ENCODE measurements at regions of chr21 and their contacts with region 1.

Region 1: DNA sequence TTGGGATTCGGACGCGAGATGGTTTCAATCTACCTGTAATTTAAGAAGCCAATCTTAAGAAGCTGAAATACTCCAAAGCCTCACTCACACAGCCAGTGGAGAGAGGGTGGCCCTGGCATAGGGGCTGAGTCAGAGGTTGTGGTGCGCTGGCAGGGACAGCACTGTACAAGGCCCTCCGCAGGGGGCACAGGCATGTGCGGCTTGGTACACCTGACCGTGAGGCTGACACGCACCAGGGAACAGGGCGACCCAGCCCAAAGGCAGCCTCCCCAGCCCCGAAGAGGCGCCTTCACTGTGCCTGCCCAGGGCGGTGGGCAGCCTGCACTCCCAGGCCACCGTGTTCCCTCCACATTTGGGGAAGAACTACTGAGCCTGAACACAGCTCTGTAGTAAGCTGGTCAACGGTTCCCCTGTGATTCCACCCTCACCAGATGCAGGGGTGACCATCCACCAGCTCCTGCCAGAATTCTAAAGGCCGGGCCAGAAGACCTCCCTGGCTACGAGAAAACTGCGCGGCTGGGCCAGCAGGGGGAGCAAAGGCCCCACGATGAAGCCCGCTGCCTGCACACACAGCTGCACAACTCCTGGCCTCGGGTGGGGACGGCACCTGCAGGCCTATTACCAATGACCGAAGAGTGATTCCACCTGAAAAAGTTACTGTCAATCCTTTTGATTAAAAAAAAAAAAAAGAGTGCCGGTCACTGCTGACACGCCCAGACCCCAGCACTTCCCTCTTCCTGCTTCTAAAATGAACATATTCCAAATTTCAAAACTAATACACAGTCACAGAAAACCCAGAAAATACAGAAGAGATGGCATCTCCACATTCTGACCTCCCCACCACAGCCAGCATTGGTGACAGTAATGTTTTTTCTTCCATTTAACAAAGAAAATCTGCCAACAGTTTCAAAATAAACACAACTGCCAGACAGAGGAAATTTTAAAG is 49.6 kb upstream of the RIPK4 start:
- DNase-seq: peak; percentile 51 to 64
- H3K4me3 ChIP-seq: no peak overlapping the region
- H3K4me3 Mint-ChIP-seq: no peak overlapping the region
- H3K27ac Mint-ChIP-seq: peak overlapping the region; percentile 42
- H3K4me1 ChIP-seq: 0 out of 2 replicates have a peak, but pooled peaks cover 3% of the 10 kb centered on the region
- H3K4me1 Mint-ChIP-seq: no peaks in the 10 kb centered on the region
- H3K27me3 ChIP-seq: no peaks in the 10 kb centered on the region
- H3K27me3 Mint-ChIP-seq: no peaks in the 10 kb centered on the region
- CTCF ChIP-seq: peak; percentile 73

Region 2: GRCh38 chr21:41768437-41769061 is 47.9 kb before region 1 on chr21:
- CTCF ChIA-PET with region 1: interaction called, 11 read pairs
- POLR2A ChIA-PET with region 1: no interaction called
- intact Hi-C with region 1: no loop called
- DNase-seq: peak; percentile 91 to 93
- H3K4me3 ChIP-seq: peak overlapping the region; percentile 90
- H3K4me3 Mint-ChIP-seq: peak overlapping the region; percentile 90
- H3K27ac Mint-ChIP-seq: peak overlapping the region; percentile 94
- H3K4me1 ChIP-seq: peaks cover 40% of the 10 kb centered on the region
- H3K4me1 Mint-ChIP-seq: peaks cover 64% of the 10 kb centered on the region
- H3K27me3 ChIP-seq: no peaks in the 10 kb centered on the region
- H3K27me3 Mint-ChIP-seq: no peaks in the 10 kb centered on the region
- CTCF ChIP-seq: peak; percentile 41 to 68

Region 3: DNA sequence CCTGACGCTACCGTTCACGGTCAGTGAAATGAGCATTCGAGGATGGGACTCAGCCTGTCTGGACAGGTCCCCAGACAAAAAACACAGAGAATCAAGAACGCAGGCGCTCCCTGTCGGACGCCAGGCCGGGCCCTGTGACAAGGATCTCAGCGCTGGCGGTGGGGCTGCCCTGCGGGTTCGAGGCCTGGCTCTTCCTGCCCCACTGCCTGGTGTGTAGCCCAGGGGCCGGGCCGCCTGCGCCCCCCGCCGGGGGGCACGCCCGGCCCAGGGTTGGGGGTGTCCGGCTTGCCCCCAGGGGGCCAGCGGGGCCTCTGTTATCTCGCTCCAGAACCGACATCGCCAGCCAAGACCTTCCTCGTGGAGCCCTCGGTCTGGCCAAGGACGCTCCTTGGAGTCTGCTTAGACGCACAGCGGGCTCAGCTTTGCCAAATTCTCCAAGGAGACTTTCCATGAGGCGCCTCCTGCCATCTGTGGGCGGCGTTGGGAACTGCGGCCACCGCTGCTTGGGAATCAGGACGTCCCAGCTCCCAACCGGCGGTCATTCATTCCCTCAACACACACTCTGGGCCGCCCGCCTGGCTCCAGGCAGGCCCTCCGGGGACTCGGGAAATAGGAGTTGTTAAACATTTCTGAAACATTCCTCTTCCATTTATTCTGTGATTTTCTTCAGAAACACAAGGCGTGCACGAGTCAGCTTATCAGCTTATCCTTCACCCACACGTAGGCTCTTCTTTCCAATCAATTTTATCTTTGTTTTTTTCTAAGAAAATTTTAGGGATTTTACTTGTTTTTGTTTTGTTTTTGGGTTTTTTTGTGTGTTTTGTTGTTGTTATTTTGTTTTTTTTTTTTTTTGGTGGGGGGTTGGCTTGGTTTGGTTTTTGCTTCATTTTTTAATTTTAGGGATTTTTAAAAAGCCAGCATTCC is 38.3 kb before region 1 on chr21:
- CTCF ChIA-PET with region 1: interaction called, 6 read pairs
- POLR2A ChIA-PET with region 1: no interaction called
- intact Hi-C with region 1: loop called (anchors 1 kb)
- DNase-seq: peak; percentile 90 to 92
- H3K4me3 ChIP-seq: no peak overlapping the region
- H3K4me3 Mint-ChIP-seq: peak overlapping the region; percentile 35
- H3K27ac Mint-ChIP-seq: no peak overlapping the region
- H3K4me1 ChIP-seq: peaks cover 19% of the 10 kb centered on the region
- H3K4me1 Mint-ChIP-seq: peaks cover 26% of the 10 kb centered on the region
- H3K27me3 ChIP-seq: no peaks in the 10 kb centered on the region
- H3K27me3 Mint-ChIP-seq: no peaks in the 10 kb centered on the region
- CTCF ChIP-seq: peak; percentile 88 to 89

Region 4: DNA sequence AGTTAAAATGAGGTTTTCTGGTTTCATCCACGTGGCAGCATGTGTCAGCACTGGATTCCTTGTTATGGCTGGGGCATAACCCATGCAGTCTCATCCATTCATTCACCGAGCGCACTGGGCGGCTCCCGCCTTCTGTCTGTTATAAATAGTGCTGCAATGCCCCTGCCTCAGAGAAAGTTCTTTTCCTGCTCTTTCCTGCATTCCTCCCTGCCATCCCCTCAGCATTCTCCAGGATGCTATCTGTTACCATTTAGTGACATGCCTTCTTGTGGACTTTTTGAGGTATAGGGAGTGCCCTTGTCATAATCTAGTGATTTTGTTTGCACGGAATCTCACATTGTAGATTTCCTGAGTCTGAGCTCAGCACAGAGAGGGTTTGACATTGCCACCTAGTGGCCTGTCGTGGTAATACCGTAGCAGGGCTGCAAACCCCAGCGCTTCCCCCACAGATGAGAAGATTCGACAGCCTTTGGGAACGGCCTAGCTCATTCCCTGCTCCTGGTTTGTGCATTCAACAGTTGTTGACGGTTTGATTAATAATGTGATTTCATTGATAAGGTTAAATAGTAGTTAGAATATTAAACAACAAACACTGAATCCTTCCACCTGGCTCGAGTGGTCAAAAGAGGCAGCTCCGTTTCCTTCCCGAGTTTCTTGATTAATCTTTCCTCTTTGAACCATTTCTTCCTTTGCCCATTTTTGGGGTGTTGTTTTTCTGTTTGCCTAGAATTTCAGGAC is 300.9 kb after region 1 on chr21:
- CTCF ChIA-PET with region 1: interaction called, 4 read pairs
- POLR2A ChIA-PET with region 1: no interaction called
- intact Hi-C with region 1: loop called (anchors 1 kb)
- DNase-seq: peak; percentile 66 to 79
- H3K4me3 ChIP-seq: no peak overlapping the region
- H3K4me3 Mint-ChIP-seq: no peak overlapping the region
- H3K27ac Mint-ChIP-seq: no peak overlapping the region
- H3K4me1 ChIP-seq: peaks cover 20% of the 10 kb centered on the region
- H3K4me1 Mint-ChIP-seq: peaks cover 20% of the 10 kb centered on the region
- H3K27me3 ChIP-seq: no peaks in the 10 kb centered on the region
- H3K27me3 Mint-ChIP-seq: no peaks in the 10 kb centered on the region
- CTCF ChIP-seq: peak; percentile 87 to 89